GM13976 (cell line): ENCODE measurements at regions of chr10 and their contacts with region 1.

Region 1: GRCh38 chr10:103685880-103686669 is 169.3 kb downstream of the SH3PXD2A start:
- DNase-seq: peak; percentile 86
- CTCF ChIP-seq: peak; percentile 96

Region 2: DNA sequence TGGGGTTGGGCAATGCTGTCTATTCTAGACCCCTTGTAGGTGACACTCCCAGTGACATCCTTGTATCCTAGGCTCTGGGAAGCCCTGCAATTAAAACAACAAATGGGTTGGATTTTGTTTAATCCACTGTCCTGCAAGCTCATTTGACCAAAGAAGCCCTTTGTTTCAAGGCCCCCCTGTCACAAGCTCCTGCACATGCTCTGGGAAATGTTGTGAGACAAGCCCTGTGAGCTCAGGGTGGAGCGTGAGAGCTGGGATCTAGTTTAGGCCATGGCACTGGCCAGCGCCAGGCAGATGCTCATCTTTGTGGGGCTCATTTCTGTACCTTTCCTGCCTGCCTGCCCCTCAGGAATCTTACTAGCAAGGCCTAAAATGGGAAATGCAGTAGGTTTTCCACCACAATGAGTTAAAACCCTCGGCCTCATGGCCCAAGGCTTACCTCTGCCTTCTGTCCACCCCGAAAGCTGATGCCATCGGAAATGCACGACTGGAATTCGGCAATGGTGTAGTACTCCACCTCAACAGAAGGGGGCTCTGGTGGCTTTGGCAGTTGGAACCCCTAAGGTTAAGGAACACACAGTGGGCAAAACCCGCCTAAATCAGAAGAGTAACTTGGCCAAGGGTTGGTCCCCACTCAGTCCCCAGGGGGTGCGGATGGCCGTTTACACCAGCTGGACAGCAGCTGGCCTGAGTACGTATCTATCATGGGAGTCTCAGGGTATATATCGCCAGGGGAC is 80.5 kb before region 1 on chr10:
- in situ Hi-C with region 1: loop called (anchors 5 kb)
- DNase-seq: peak; percentile 72
- CTCF ChIP-seq: peak; percentile 41

Region 3: DNA sequence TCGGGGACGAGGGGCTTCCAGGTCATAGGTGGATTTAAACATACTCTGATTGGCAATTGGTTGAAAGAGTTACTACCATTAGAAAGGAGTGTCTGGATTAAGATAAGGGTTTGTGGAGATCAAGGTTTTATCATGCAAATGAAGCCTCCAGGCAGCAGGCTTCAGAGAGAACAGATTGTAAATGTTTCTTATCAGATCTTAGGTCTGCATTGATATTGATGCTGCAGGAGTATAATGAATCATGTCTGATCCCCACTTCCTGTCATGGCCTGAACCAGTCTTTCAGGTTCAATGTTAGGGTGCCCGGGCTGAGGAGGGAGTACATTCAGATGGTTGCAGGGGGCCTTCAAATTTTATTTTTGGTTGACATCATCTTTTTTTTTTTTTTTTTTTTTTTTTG is 117.9 kb after region 1 on chr10:
- in situ Hi-C with region 1: no loop called
- DNase-seq: no peak
- CTCF ChIP-seq: no peak

Region 4: GRCh38 chr10:104485632-104486031 is 799.6 kb after region 1 on chr10:
- in situ Hi-C with region 1: no loop called
- DNase-seq: no peak
- CTCF ChIP-seq: no peak